AG04449 (cell line): ENCODE measurements at regions of chr6 and their contacts with region 1.

Region 1: GRCh38 chr6:150813319-150813992 is 52.0 kb upstream of the MTHFD1L start:
- DNase-seq: no peak
- H3K4me3 ChIP-seq: no peak overlapping the region
- CTCF ChIP-seq: no peak

Region 2: DNA sequence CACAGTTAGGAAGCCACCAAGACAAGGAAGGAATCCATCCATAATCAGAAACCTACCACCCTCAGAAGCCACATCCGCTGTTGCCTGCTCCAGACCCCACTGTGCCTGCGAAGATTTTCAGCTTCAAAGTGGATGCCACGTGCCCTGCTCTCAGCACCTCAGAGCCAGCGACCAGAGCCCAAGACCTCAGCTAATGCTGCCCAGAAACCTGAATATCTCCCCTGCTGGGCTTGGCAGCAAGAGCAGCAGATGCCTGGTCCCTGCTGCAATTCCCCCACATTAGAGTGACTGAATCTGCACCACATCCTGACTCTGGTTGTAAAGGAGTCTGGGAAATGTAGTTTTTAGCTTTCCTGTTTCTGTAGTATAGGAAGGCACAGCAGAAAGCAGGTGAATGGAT is 733.9 kb before region 1 on chr6:
- CTCF ChIA-PET with region 1: interaction called, 37 read pairs
- POLR2A ChIA-PET with region 1: no interaction called
- DNase-seq: no peak
- H3K4me3 ChIP-seq: no peak overlapping the region
- CTCF ChIP-seq: no peak

Region 3: DNA sequence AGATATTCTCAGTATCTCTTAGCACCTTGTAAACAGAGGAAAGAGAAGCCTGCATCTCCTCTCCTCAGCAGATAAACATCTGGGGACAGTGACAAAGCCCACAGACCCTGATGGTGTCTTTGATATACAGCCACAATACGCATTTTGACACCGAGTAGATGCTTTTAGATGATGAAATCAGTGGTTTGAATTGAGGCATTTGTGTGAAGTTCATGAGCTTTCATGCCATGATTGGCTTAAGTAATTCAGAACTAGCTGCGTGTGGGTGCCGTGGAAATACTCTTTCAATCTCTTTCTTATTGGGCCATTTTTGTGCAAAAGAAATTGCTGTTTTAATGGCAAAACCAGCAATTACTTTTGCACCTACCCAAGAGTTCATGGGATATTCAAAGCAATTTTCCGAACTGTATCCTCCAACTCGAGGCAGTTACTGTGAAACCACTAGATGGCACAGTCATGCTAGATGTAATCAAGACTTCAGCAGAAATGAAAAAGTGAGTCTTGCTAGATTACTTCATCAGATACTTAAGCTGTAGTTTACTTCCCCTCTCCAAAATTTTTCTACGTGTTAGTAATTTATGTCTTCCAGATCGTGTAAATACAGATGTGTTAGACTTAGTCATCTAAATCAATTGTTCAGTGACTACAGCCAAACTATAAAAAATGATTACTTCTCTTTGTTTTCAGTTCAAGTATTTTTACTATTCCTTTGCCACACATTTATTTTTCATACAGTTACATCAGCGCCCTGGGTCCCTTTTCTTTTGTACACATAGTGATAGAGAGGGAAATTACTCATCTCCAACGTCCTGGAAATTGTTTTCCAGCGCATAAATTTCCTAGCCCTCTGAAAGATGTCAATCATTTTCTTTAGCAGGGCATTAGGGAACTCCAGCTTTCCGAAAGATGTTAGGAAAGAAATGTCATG is 395.3 kb before region 1 on chr6:
- CTCF ChIA-PET with region 1: interaction called, 198 read pairs
- POLR2A ChIA-PET with region 1: interaction called, 5 read pairs
- DNase-seq: peak; percentile 36
- H3K4me3 ChIP-seq: peak overlapping the region; percentile 49
- CTCF ChIP-seq: peak; percentile 54

Region 4: GRCh38 chr6:150830439-150831165 is 17.1 kb after region 1 on chr6:
- CTCF ChIA-PET with region 1: interaction called, 45 read pairs
- POLR2A ChIA-PET with region 1: no interaction called
- DNase-seq: peak; percentile 37
- H3K4me3 ChIP-seq: no peak overlapping the region
- CTCF ChIP-seq: no peak

Region 5: DNA sequence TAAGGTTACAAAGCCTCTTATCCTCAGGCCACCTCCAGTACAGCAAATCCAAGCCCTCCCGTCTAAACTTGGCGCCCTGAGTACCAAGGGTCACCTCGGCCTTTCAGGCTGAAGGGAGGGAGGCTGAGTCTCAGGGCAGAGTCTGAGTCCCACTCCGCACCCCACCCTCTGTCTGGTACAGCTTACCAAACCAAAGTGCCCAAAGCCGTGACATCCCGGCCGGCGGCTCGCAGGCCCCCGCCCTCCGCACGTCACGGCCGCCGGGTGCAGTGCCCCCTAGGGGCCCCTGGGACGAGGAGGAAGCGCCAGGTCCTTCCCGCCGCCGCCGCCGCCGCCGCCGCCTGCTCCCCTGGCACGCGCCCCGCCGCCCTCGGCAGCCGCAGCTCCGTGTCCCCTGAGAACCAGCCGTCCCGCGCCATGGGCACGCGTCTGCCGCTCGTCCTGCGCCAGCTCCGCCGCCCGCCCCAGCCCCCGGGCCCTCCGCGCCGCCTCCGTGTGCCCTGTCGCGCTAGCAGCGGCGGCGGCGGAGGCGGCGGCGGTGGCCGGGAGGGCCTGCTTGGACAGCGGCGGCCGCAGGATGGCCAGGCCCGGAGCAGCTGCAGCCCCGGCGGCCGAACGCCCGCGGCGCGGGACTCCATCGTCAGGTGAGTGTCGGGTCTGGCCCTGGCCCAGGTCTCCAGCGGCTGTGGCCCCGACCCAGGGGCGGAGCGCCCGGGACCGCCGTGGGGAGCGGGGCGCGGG is 52.1 kb after region 1 on chr6 and contains the start of gene MTHFD1L:
- CTCF ChIA-PET with region 1: interaction called, 55 read pairs
- POLR2A ChIA-PET with region 1: interaction called, 4 read pairs
- DNase-seq: peak; percentile 60
- H3K4me3 ChIP-seq: peak within 1 kb of the TSS; percentile 78
- CTCF ChIP-seq: peak; percentile 72

Region 6: DNA sequence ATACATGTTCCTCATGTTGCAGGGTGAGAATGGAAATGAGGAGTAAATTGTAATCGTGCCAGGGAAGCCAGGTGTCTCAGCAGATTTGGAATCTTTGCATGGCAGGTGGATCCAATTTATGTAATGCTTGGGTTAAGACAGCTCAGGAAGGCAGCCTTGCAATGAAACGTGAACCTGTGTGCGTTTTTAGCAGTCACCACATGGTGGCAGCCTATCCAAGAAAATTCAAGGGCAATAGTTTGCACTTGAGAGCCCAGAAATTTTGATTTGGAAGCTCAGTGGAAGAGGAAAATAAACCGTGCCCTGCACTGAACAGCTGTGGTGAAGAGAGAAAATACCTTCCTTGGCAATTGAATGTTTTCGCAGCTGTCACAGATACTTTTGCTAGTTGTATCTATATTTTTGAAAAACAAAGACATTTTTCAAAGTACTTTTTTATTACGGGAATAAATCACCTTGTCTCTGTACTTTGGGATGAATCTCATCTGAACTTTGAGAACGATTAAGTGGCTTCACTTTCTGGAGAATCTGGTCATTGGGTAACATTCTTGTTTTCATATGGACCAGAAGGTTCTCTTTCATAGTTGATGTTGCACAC is 78.5 kb after region 1 on chr6:
- CTCF ChIA-PET with region 1: interaction called, 56 read pairs
- POLR2A ChIA-PET with region 1: no interaction called
- DNase-seq: peak; percentile 45
- H3K4me3 ChIP-seq: no peak overlapping the region
- CTCF ChIP-seq: peak; percentile 77

Region 7: DNA sequence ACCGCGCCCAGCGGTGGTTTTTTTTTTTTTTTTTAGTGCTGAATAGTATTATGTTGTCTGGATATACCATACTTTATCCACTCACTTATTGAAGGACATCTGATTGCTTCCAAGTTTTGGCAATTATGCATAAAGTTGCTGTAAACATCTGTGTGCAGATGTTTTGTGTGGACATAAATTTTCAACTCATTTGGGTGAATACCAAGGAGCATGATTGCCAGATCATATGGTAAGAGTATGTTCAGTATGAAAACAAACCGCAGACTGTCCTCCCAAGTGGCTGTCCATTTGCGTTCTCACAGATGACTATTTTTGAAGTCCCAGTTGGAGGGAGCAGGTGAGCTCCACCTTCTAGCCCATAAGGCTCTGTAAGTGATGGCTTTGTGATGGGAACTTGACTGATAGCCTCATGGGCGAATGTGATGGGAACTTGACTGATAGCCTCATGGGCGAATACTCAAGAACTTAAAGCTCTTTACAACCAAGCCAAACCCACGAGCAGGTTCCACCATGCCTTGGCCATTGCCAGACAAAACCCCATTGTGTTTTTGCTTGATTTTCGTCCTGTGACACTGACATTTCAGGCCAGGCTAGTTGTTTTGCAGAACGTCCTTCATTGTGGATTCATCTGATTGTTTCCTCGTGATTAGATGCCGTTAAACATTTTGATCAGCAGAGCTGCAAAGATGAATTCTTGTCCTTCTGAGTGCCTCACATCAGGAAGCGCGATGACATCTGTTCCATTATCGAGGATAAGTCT is 526.9 kb after region 1 on chr6:
- CTCF ChIA-PET with region 1: interaction called, 49 read pairs
- POLR2A ChIA-PET with region 1: no interaction called
- DNase-seq: no peak
- H3K4me3 ChIP-seq: no peak overlapping the region
- CTCF ChIP-seq: no peak